Gastrocnemius medialis (tissue), 4 donors: ENCODE measurements at regions of chr12 and their contacts with region 1.

Region 1: GRCh38 chr12:56224102-56224701 is at the start of gene NABP2:
- DNase-seq: peak; percentile 97 to 99
- ATAC-seq: peak; percentile 79 to 84
- H3K4me3 ChIP-seq: peak within 1 kb of the TSS; percentile 63 to 85 (median 79)
- H3K27ac ChIP-seq: peak within 1 kb of the TSS; percentile 96 to 100 (median 98)
- H3K4me1 ChIP-seq: peaks cover 34 to 45% of the 10 kb centered on the region in 2 donors
- H3K27me3 ChIP-seq: no peaks in the 10 kb centered on the region
- CTCF ChIP-seq: peak; percentile 94 to 96 (median 95)
- POLR2A ChIP-seq: peak in 1 of 2 donors; percentile 25
- total RNA-seq, gene NABP2: 29.6 to 75.0 (median 42.8) TPM

Region 2: DNA sequence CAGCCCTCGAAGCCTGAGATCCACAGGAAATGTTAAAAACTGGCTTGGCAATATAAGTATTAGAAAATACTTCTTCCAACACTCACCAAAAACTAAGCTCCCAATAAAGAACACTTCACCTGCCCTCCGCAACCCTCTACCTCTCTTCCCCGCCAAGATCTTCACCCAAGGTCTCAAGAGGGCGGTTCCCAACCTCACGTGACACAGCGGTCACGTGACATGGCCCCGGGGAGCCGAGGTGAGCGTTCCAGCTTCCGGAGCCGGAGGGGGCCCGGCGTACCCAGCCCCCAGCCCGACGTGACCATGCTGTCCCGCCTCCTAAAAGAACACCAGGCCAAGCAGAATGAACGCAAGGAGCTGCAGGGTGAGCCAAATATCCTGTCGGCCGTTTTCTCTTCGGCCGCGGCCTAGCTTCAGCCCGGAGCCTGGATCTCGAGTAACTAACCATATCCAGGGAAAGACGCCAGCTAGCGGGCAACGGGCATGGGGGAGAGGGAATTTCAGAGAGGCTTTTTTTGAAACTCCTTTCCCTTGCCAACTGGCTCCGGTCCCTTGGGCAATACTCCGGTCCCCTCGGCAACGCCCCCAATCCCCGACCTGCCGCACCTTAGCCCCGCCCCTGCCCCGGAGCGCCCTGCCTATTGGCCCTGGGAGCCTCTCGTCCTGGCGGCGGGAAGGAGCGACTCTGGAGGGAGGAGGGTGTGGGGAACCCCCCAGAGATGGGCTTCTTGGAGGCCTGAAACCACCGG is 508.2 kb before region 1 on chr12 and contains the start of gene BLOC1S1:
- in situ Hi-C with region 1: no loop called
- intact Hi-C with region 1: loop called (anchors 5 kb)
- DNase-seq: peak; percentile 90 to 96
- ATAC-seq: peak; percentile 56 to 63
- H3K4me3 ChIP-seq: peak within 1 kb of the TSS; percentile 69 to 95 (median 81)
- H3K27ac ChIP-seq: peak within 1 kb of the TSS; percentile 95 to 100 (median 99)
- H3K4me1 ChIP-seq: peaks cover 80 to 85% of the 10 kb centered on the region in 2 donors
- H3K27me3 ChIP-seq: no peaks in the 10 kb centered on the region
- CTCF ChIP-seq: peak in 4 of 5 experiments; percentile 13 to 58 (median 38)
- POLR2A ChIP-seq: peak; percentile 54 to 56
- total RNA-seq, gene BLOC1S1: 255 to 434 (median 300) TPM

Region 3: DNA sequence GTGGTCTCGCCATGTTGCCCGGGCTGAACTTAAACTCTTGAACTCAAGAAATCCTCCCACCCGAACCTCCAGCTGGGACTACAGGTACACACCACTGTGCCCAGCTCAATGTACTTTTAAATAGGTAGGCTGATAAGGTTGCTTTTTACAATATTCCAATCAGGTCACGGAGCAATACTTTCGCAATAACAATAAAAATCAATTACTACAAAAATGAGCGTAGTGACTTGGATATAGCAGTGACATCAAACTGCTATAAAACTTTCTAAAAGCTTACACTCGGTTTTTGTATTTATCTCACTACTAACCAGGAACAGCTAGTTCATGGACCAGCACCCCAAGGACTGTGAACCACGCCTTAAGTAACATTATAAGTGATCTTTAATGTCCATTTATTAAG is 417.2 kb before region 1 on chr12:
- in situ Hi-C with region 1: no loop called
- intact Hi-C with region 1: no loop called
- DNase-seq: no peak
- ATAC-seq: no peak
- H3K4me3 ChIP-seq: no peak overlapping the region
- H3K27ac ChIP-seq: no peak overlapping the region
- H3K4me1 ChIP-seq: peaks cover 0 to 6% of the 10 kb centered on the region in 2 donors
- H3K27me3 ChIP-seq: no peaks in the 10 kb centered on the region
- CTCF ChIP-seq: no peak
- POLR2A ChIP-seq: no peak

Region 4: GRCh38 chr12:56127888-56128669 is 96.1 kb before region 1 on chr12 and contains the start of gene ESYT1:
- in situ Hi-C with region 1: no loop called
- intact Hi-C with region 1: loop called (anchors 1 kb)
- DNase-seq: peak; percentile 99 to 100
- ATAC-seq: peak; percentile 87
- H3K4me3 ChIP-seq: peak within 1 kb of the TSS; percentile 71 to 95 (median 88)
- H3K27ac ChIP-seq: peak within 1 kb of the TSS; percentile 92 to 99 (median 98)
- H3K4me1 ChIP-seq: peaks cover 44 to 51% of the 10 kb centered on the region in 2 donors
- H3K27me3 ChIP-seq: no peaks in the 10 kb centered on the region
- CTCF ChIP-seq: peak in 1 of 5 experiments; percentile 13
- POLR2A ChIP-seq: peak; percentile 98 to 99
- total RNA-seq, gene ESYT1: 45.9 to 77.7 (median 62.1) TPM

Region 5: DNA sequence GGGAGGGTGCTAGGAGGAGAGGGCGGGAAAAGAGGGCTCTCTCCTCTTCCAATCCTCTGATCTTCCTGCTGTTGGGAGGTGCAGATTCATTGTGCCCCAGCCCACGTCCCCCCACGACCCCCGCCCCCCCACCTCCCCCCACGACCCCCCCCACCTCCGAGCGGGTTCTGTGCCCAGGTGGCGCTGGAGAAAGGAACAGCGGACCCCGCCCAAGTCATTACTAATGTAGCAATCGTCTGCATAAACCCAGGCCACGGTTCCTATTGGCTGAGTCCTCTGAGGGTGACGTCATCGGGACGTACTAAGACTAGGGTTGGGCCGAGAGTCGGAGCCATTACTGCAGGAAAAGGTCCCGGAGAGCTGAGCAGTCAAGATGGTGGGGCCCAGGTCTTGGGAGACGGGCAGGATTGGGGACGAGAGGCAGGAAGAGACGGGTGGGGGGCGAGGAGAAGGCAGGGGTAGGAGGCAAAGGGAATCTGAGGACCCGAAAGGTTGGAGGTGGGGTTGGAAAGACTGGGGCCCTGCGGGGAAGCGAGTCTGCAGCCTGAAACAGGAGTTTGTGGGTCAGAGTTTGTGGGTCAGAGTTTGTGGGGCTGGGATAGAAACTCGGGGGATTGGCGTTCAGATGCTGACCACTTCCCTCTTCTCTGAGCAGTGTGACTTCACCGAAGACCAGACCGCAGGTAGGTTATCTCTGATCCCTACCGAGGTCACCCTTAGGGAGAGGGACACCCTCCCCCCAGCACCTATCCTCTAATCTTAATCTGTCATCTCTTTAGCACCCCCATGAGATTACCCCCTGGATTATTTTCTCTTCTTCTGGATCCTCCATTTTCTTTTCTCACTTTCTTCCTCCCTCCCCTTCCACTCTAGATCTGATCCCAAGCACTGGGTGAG is 65.9 kb before region 1 on chr12 and contains the start of gene MYL6:
- in situ Hi-C with region 1: no loop called
- intact Hi-C with region 1: loop called (anchors 2 kb)
- DNase-seq: peak; percentile 97 to 98
- ATAC-seq: peak; percentile 90 to 94
- H3K4me3 ChIP-seq: peak within 1 kb of the TSS; percentile 68 to 93 (median 80)
- H3K27ac ChIP-seq: peak within 1 kb of the TSS; percentile 87 to 97 (median 96)
- H3K4me1 ChIP-seq: peaks cover 35 to 51% of the 10 kb centered on the region in 2 donors
- H3K27me3 ChIP-seq: no peaks in the 10 kb centered on the region
- CTCF ChIP-seq: peak in 1 of 5 experiments; percentile 7
- POLR2A ChIP-seq: peak; percentile 97 to 98
- total RNA-seq, gene MYL6: 159 to 324 (median 202) TPM

Region 6: DNA sequence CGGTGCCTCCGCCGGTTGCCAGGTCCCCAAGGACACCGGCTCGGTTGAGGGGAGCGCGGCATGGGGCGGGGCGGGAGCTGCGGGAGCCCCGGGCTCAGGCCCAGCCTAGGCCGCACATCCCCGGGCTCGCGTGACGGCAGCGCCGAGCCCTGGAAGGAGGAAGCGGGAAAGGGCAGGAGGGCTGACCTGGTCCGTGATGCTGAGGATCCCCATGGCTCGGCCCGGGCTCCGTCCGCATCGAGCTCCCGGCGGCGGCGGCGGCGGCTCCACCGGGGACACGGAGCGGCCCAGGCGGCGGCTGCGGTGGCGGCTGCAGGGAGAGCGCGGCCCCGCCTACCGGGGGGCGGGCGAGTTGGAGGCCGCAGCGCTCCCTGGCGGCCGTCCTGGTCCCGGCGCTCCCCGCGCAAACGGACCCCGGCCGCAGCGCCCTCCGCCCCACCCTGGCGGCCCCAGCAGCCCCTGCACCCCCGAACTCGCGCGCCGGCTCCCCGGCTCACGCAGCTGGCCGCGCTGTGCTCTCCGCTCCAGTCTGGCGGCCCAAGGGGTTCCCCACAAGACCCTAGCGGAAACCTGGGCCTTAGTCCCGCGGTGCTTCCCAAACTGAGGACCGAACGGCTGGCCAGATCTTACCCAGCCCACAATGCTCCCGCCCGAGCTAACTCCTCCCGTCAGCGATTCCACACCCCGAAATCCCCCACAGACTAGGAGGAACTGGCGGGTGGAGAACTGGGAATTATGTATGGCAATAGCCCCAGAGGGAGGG is 34.0 kb after region 1 on chr12 and contains the start of gene ANKRD52:
- in situ Hi-C with region 1: no loop called
- intact Hi-C with region 1: loop called (anchors 2 kb)
- DNase-seq: peak; percentile 40 to 58
- ATAC-seq: peak; percentile 67 to 79
- H3K4me3 ChIP-seq: peak within 1 kb of the TSS; percentile 71 to 98 (median 79)
- H3K27ac ChIP-seq: peak within 1 kb of the TSS; percentile 89 to 97 (median 91)
- H3K4me1 ChIP-seq: peaks cover 33 to 48% of the 10 kb centered on the region in 2 donors
- H3K27me3 ChIP-seq: no peaks in the 10 kb centered on the region
- CTCF ChIP-seq: peak; percentile 49 to 97 (median 87)
- POLR2A ChIP-seq: peak; percentile 59 to 75
- total RNA-seq, gene ANKRD52: 14.7 to 30.9 (median 18.9) TPM

Region 7: GRCh38 chr12:56299853-56300643 is 75.8 kb after region 1 on chr12 and contains the start of gene CS:
- in situ Hi-C with region 1: no loop called
- intact Hi-C with region 1: loop called (anchors 2 kb)
- DNase-seq: peak; percentile 99
- ATAC-seq: peak; percentile 82 to 94
- H3K4me3 ChIP-seq: peak within 1 kb of the TSS; percentile 74 to 95 (median 86)
- H3K27ac ChIP-seq: peak within 1 kb of the TSS; percentile 91 to 97 (median 94)
- H3K4me1 ChIP-seq: peaks cover 66 to 71% of the 10 kb centered on the region in 2 donors
- H3K27me3 ChIP-seq: no peaks in the 10 kb centered on the region
- CTCF ChIP-seq: peak in 1 of 5 experiments; percentile 29
- POLR2A ChIP-seq: peak; percentile 86 to 92
- total RNA-seq, gene CS: 211 to 359 (median 271) TPM

Region 8: GRCh38 chr12:56468216-56469006 is 244.2 kb after region 1 on chr12 and contains the start of gene SPRYD4:
- in situ Hi-C with region 1: no loop called
- intact Hi-C with region 1: loop called (anchors 10 kb)
- DNase-seq: peak; percentile 87 to 91
- ATAC-seq: peak; percentile 91 to 95
- H3K4me3 ChIP-seq: peak within 1 kb of the TSS; percentile 82 to 96 (median 89)
- H3K27ac ChIP-seq: peak within 1 kb of the TSS; percentile 88 to 94 (median 92)
- H3K4me1 ChIP-seq: peaks cover 11 to 13% of the 10 kb centered on the region in 2 donors
- H3K27me3 ChIP-seq: no peaks in the 10 kb centered on the region
- CTCF ChIP-seq: peak in 3 of 5 experiments; percentile 35 to 39 (median 35)
- POLR2A ChIP-seq: peak; percentile 82 to 85
- total RNA-seq, gene SPRYD4: 1.6 to 4.7 (median 2.9) TPM